Cardiac septum (tissue), 1 donor: ENCODE measurements at regions of chr2 and their contacts with region 1.

Region 1: GRCh38 chr2:3536682-3537632 is 17.6 kb upstream of the ADI1 start:
- DNase-seq: no peak

Region 2: DNA sequence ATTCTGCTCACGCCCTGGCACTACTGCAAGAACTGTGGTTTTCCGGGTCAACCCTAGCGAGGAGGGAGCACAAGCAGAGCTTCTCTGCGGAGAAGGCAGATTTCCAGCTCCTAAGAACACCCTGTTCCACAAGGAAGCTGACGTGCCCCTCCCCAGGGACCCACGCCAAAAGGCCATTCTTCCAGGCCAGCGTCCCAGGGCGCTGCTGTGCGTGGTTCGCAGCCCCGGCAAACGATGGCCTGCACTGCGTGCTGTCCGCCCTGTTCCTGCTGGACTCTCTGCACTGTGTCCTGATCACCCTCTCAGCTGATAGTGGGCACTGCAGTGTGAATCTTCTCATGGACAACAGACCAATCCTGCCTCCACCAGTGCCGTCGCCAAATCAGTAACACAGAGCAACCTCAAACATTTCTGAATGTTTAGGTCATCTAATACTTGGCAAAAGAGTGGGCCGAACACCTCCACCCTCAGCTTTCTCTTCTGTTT is 66.7 kb before region 1 on chr2:
- intact Hi-C with region 1: loop called (anchors 5 kb)
- DNase-seq: peak; percentile 82